ENCODE measurements at regions of chr17 and their contacts with region 1.

Region 1: GRCh38 chr17:17515934-17516930 is 20.0 kb upstream of the RASD1 start:
- DNase-seq: no peak
- ATAC-seq: peak; percentile 20

Region 2: DNA sequence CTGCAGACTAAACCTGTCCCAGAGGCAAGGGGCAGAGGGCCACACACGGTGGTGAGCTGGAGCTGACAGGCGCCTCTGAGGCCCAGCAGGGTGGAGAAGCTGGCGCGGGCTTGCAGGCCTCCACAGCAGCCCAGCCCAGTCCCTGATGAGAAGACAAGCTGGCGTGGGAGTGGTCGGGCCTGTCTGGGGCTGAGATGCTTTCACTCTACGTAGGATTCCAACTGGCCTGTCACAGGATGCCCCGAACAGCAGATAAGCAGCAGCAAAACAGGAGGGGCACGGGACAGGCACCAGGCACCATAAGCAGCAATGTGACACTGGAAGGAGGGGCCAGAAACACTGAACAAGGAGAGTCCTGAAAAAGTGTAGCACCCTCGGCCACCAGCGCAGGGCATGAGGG is 35.1 kb after region 1 on chr17:
- intact Hi-C with region 1: loop called (anchors 1 kb)
- DNase-seq: no peak
- ATAC-seq: peak; percentile 57